ENCODE measurements at regions of chr11 and their contacts with region 1.

Region 1: DNA sequence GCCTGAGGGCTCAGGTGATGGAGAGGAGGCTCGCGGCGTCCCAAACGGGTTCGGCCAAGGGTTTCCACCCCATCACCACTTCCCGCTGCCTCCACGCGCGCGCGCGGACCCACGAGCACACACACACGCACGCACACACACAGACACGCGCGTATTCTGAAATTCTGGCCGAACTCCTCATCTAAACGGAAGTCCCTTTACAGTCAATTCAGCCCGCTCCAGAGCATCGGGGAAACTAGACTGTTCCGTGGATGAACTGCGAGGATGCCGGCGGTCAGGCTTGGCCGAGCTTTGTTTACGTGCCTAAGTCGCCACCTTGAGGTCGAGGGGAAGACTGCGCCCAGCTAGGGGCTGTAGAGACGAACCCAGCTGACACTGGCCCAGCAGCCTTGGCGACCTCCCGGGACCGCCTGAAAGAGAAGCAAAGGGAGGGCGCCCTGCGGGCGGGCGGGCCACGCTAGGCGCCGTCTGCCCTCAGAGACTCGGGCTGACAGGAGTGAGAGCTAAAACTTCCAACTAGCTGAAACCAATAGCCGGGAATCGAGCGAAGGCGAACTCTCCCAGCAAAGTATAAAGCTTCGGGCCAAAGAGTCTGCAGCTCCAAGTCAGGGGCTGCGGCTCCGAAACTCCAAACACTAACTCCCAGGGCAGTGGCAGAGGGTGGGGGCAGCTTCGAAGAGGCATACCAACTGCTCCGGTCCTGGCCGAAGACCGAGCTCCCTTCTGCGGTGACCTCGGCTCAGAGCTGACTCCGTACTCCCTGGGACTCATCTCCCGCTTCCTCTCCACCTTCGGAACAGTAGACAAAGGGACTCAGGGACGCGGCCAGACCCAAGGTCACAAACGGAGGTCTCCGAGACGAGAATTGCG is 124.7 kb upstream of the C11orf58 start:
- DNase-seq: peak; percentile 64
- H3K4me3 ChIP-seq: peak overlapping the region; percentile 29
- H3K27ac ChIP-seq: no peak overlapping the region
- H3K4me1 ChIP-seq: no peaks in the 10 kb centered on the region
- CTCF ChIP-seq: peak; percentile 78

Region 2: DNA sequence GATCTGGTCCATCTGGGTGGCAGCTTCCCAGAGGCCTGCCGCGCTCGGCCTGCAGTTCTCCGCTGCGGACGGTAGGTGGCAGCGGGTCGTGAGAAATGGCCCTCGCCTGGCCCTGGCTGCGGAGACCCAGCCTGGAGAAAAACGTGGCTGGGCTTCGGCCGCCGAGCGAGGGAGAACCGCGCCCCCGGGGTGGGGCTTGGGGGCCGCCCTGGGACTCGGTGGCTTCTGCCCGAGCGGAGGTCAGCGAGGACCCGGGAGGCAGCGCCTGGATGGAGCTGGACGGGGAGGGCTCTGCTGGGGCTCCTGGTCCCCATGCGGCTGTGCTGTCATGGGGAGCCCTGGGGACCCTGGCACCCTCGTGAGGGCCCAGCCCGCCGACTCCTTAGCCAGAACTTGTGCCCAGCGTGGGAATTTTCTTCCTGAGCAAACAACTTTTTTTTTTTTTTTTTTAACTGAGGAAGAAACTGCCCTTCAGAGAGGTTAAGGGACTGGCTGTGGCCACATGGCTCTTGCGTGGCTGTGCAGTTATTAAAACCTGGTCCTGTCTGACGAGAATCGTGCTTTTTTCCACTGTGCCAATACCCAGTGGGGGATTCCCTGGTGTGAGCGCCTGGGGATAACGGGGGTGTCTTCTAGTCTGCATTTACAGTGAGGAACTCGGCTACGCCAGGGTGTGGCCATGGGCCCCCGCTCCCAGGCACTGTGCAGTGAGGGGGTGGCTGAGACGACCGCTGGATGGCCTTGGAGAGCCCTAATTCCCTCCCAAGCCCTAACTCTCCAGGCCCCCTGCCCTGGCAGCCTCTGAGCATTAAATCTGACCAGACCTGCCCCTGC is 963.4 kb before region 1 on chr11:
- CTCF ChIA-PET with region 1: interaction called, 3 read pairs
- POLR2A ChIA-PET with region 1: no interaction called
- intact Hi-C with region 1: loop called (anchors 5 kb)
- DNase-seq: peak; percentile 81
- H3K4me3 ChIP-seq: peak overlapping the region; percentile 45
- H3K27ac ChIP-seq: no peak overlapping the region
- H3K4me1 ChIP-seq: peaks cover 6% of the 10 kb centered on the region
- CTCF ChIP-seq: peak; percentile 78

Measured in OCI-LY7 (cell line).